ENCODE measurements at regions of chr4 and their contacts with region 1.

Region 1: DNA sequence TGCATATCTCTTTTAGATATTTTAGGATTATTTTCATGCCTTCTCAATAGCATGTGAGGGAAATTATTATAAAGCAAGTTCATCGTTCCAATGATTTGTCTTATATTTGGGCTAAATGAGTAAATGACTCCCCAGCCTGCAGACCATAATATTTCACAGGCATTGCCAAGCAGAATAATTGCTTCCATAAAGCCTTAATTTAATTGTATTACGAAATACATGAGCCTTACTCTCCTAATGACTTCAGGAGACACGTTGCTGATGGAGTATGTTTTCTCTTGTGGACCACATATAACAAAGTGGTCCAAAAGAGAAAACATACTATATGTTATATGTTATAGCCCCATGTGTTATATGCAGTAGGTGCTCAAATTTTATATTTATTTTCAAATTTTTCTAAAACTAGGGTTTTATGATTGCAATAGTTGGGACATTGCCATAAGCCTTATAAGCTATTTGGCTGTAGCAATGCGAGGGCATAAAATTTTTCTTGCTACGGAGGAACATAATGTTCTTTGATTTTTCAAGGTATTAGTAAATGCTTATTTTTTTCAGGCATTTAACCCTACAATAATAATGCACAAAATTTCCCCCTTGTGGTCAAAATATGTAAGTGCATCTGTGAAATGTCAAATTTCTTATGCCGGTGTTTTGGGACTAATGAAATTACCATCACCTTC is 26.2 kb upstream of the TMPRSS11D start:
- DNase-seq: peak; percentile 50
- H3K4me3 Mint-ChIP-seq: no peak overlapping the region
- H3K27ac Mint-ChIP-seq: no peak overlapping the region
- H3K4me1 Mint-ChIP-seq: no peaks in the 10 kb centered on the region
- H3K27me3 Mint-ChIP-seq: no peaks in the 10 kb centered on the region
- CTCF ChIP-seq: peak; percentile 65

Region 2: DNA sequence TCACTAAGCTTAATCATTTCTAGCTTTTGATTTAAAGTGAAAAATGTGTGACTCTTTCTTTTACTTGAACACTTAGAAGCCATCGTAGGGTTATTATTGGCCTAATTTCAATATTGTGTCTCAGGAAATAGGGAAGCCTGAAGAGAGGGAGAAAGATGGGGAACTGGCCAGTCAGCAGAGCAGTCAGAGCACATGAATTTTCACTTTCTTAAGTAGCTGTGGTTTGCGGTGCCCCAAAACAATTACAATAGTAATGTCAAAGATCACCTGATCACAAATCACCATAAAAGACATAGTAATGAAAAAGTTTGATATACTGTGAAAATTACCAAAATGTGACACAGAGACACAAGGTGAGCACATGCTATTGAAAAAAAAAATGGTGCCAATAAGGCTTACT is 410.2 kb before region 1 on chr4:
- CTCF ChIA-PET with region 1: no interaction called
- POLR2A ChIA-PET with region 1: no interaction called
- intact Hi-C with region 1: no loop called
- DNase-seq: no peak
- H3K4me3 Mint-ChIP-seq: no peak overlapping the region
- H3K27ac Mint-ChIP-seq: no peak overlapping the region
- H3K4me1 Mint-ChIP-seq: no peaks in the 10 kb centered on the region
- H3K27me3 Mint-ChIP-seq: no peaks in the 10 kb centered on the region
- CTCF ChIP-seq: no peak

Region 3: DNA sequence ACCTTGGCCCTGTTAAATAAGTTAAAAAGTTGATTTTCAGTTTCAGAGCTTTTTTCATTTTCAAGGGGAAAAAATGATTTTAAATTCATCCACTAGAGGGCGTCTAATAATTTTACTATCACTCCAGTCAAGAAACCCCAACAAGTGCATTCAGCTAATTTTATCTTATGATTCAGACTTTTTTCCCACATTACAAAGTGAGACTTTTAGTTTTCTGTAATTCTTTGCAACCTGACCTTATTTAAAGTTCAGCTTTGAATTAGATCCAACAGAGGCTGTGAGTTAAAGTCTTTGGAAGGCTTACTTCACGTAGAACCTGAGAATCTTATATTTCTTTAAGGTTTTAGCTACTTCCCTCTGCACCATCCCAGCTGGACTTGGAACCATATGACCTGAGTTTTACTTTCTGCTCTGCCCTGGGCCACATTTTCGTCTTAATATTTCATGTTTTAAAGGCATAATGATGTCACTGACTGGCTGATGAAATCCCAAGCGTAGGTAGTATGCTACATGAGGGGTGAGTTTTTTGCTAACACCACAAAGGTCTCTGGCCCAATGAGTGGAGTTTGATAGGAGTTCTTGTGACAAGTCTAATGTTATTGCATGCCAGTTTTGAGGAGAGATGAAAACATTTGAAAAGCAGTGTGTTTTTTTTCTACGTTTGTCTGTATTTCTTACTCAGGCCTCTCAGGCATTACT is 163.1 kb before region 1 on chr4:
- CTCF ChIA-PET with region 1: interaction called, 10 read pairs
- POLR2A ChIA-PET with region 1: no interaction called
- intact Hi-C with region 1: loop called (anchors 10 kb)
- DNase-seq: peak; percentile 39
- H3K4me3 Mint-ChIP-seq: no peak overlapping the region
- H3K27ac Mint-ChIP-seq: no peak overlapping the region
- H3K4me1 Mint-ChIP-seq: peaks cover 10% of the 10 kb centered on the region
- H3K27me3 Mint-ChIP-seq: no peaks in the 10 kb centered on the region
- CTCF ChIP-seq: peak; percentile 48

Region 4: GRCh38 chr4:67871867-67872266 is 38.2 kb before region 1 on chr4:
- CTCF ChIA-PET with region 1: interaction called, 7 read pairs
- POLR2A ChIA-PET with region 1: no interaction called
- intact Hi-C with region 1: loop called (anchors 1 kb)
- DNase-seq: peak; percentile 55
- H3K4me3 Mint-ChIP-seq: no peak overlapping the region
- H3K27ac Mint-ChIP-seq: no peak overlapping the region
- H3K4me1 Mint-ChIP-seq: peaks cover 4% of the 10 kb centered on the region
- H3K27me3 Mint-ChIP-seq: no peaks in the 10 kb centered on the region
- CTCF ChIP-seq: peak; percentile 55

Region 5: GRCh38 chr4:67899096-67899495 is 10.9 kb before region 1 on chr4:
- CTCF ChIA-PET with region 1: interaction called, 12 read pairs
- POLR2A ChIA-PET with region 1: no interaction called
- intact Hi-C with region 1: no loop called
- DNase-seq: no peak
- H3K4me3 Mint-ChIP-seq: no peak overlapping the region
- H3K27ac Mint-ChIP-seq: no peak overlapping the region
- H3K4me1 Mint-ChIP-seq: no peaks in the 10 kb centered on the region
- H3K27me3 Mint-ChIP-seq: no peaks in the 10 kb centered on the region
- CTCF ChIP-seq: no peak